OCI-LY7 (cell line): ENCODE measurements at regions of chr22 and their contacts with region 1.

Region 1: GRCh38 chr22:18001040-18001893 is 23.1 kb downstream of the MICAL3 start:
- DNase-seq: peak; percentile 99
- H3K4me3 ChIP-seq: peak overlapping the region; percentile 91
- H3K27ac ChIP-seq: peak overlapping the region; percentile 96
- H3K4me1 ChIP-seq: peaks cover 79% of the 10 kb centered on the region
- CTCF ChIP-seq: peak; percentile 73

Region 2: DNA sequence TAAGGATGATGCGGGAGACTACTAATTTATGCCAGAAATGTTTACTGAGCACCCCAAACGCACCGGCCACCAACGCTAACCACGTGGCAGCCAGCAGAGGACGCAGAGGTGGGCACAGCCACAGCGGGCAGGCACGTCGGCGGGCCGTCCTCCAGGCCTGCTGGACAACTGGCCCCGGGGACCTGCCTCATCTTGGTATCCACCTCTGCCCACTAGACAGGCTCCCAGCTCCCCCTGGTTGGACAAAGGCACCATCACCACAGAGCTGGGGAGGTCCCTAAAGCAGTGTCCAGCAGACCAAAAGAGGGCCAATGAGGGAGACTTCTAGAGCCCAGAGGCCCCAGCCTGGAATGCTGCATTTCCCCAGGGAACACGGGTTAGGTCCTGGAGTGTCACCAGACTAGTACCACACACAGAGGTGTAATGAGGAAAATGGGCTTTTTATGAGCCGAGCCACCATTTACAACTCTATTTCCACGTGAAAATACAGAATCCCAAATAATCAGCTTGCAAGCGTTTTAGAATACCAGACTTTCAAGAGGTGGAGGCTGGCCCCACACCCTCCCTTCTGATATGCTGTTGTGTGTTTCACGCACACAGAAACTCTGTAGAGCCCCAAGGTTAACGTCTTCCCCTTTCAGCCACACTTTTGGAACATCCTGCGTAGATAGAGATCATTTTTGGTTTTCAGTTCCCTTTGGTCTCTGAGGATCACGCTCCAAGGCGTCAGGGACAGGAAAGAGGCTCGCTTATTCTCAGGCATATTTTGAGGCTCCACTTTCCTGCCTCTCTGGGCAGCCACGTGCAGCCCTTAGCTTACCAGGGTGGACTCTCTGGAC is 203.3 kb before region 1 on chr22:
- CTCF ChIA-PET with region 1: no interaction called
- POLR2A ChIA-PET with region 1: interaction called, 3 read pairs
- intact Hi-C with region 1: loop called (anchors 10 kb)
- DNase-seq: peak; percentile 86
- H3K4me3 ChIP-seq: peak overlapping the region; percentile 63
- H3K27ac ChIP-seq: peak overlapping the region; percentile 96
- H3K4me1 ChIP-seq: peaks cover 85% of the 10 kb centered on the region
- CTCF ChIP-seq: no peak

Region 3: DNA sequence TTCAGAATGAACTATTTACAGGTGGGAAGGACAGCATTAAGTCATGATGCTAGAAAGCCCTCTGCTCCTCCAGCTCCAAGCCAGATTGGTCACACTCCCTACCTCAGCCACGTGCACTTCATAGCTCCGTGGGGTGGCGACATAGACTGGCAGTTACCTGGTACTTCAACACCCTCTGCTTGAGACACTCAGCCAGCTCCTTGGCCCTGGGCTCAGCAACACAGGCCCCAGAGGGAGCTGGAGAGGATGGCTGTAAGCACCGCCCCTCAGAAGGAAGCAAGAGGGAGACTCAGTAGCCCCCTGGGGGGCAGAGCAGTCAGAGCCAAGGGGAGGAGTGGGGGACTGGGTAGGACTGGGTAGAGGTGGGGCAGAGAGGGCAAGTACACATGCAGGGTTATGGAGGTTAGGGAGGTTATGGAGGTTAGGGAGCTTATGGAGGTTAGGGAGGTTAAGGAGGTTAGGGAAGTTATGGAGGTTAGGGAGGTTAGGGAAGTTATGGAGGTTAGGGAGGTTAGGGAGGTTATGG is 124.9 kb before region 1 on chr22:
- CTCF ChIA-PET with region 1: no interaction called
- POLR2A ChIA-PET with region 1: no interaction called
- intact Hi-C with region 1: no loop called
- DNase-seq: peak; percentile 54
- H3K4me3 ChIP-seq: no peak overlapping the region
- H3K27ac ChIP-seq: no peak overlapping the region
- H3K4me1 ChIP-seq: no peaks in the 10 kb centered on the region
- CTCF ChIP-seq: 0 out of 2 replicates have a peak, but pooled peaks have one; percentile 43

Region 4: GRCh38 chr22:18024276-18024947 is 23.1 kb after region 1 on chr22 and contains the start of gene MICAL3:
- CTCF ChIA-PET with region 1: interaction called, 4 read pairs
- POLR2A ChIA-PET with region 1: interaction called, 16 read pairs
- intact Hi-C with region 1: loop called (anchors 1 kb)
- DNase-seq: peak; percentile 88
- H3K4me3 ChIP-seq: peak within 1 kb of the TSS; percentile 68
- H3K27ac ChIP-seq: peak within 1 kb of the TSS; percentile 57
- H3K4me1 ChIP-seq: peaks cover 60% of the 10 kb centered on the region
- CTCF ChIP-seq: peak; percentile 76
- total RNA-seq, gene MICAL3: 80.9 and 93.2 TPM in 2 replicates

Region 5: GRCh38 chr22:18057568-18058209 is 56.4 kb after region 1 on chr22:
- CTCF ChIA-PET with region 1: interaction called, 3 read pairs
- POLR2A ChIA-PET with region 1: interaction called, 11 read pairs
- intact Hi-C with region 1: no loop called
- DNase-seq: peak; percentile 75
- H3K4me3 ChIP-seq: peak overlapping the region; percentile 50
- H3K27ac ChIP-seq: peak overlapping the region; percentile 65
- H3K4me1 ChIP-seq: peaks cover 55% of the 10 kb centered on the region
- CTCF ChIP-seq: no peak

Region 6: DNA sequence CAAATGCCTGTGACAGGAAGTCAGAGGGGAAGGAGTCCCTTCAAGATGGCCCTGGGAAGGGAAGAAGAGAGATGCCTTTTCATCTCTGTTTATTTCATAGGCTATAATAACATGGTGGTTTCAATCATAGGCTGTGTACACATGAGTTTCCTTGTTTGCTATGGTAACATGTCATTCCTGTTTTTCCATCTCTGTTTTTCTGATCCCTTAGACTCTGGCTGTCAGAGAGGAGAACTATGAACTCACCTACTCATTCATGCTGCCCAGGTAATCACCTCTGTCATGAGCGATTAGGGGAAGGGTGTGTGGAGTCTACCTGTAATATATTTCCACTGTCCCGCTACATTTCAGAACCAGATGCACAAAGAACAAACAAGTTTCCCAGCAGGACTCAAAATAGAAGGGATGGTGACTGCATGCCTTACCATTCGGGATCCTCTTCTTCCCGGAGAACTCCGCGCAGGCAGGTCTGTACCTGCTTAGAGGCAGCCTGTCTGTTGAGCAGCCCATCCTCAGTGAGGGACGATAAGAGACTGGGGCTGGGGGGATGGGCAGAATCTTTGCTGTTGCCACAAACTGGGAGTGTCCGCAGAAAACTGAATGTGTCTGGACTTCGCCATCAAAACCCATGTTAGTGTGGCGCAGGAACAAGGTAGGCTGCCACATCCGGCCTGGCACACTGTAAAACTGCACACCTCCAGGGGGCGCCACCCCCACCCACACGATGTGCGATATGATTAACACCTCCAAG is 69.5 kb after region 1 on chr22:
- CTCF ChIA-PET with region 1: interaction called, 6 read pairs
- POLR2A ChIA-PET with region 1: interaction called, 13 read pairs
- intact Hi-C with region 1: loop called (anchors 1 kb)
- DNase-seq: peak; percentile 63
- H3K4me3 ChIP-seq: peak overlapping the region; percentile 57
- H3K27ac ChIP-seq: peak overlapping the region; percentile 99
- H3K4me1 ChIP-seq: peaks cover 99% of the 10 kb centered on the region
- CTCF ChIP-seq: peak; percentile 96